A549 (cell line): ENCODE measurements at regions of chr5 and their contacts with region 1.

Region 1: DNA sequence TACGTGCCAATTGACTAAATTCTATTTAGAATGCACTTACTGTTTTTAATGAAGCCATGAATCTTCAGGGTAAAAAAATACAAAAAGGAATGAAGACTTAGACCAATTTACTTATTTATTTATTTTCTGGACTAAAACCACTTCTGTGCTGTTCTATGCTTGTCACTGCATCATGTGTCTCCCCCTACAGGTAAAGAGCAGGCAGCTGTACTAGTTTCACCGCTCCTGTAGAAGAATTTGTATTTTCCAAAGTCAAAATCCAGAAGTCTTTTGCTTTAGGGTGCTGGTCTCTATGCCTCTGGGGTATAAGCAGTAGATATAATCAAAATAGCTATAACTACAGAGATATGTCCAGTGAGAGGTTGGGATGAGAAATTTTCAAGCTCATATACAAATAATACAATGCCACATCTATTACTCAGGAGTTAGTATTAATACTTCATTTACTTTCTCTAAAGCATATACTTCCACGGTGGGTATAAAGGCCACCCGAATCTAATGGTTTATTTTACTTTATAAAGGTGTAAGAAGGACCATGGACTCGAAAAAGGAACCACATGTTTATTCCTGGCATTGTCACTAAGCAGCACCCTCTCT is 591.5 kb downstream of the RAB3C start:
- DNase-seq: peak; percentile 38 to 88
- ATAC-seq: peak; percentile 82 to 86
- H3K4me3 ChIP-seq: no peak overlapping the region
- H3K27ac ChIP-seq: peak overlapping the region; percentile 75 to 83
- H3K4me1 ChIP-seq: peaks cover 76% of the 10 kb centered on the region
- CTCF ChIP-seq: peak; percentile 90
- EP300 ChIP-seq: no peak
- POLR2A ChIP-seq: no peak
- RAD21 ChIP-seq: peak; percentile 88 to 91

Region 2: DNA sequence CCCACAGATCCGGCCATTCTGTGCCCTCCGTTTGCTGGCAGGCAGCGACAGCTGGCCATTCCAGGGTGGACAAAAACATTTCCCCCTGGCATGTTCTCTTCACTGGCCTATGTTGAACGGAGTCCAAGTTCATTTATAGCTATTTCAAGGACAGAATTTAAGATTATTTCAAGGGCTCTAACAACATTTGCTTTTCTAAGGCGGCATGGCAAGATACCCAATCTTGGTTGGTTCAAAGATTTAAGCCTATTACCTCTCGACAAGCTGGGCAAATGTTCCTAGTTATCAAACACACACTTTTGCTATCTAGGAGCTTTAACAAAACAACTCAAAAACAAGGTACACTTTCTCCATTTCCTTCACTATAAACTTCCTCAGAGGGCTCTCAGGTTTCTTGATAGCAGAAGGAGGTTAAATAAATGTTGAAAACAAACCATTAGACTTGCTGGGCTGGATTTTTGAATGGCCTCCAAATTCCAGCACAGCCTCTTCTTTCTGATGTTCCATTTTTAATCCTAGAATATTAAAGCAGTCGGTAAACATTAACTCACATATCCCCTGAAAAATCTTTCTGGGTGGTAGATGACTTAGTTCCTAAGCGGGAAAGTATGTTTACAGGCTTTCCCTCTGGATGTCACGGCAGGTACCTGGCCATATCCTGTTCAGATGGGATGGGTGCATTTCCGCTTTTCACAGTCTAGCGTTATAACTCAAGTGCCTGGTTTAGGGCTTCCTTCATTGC is 1046.7 kb before region 1 on chr5:
- CTCF ChIA-PET with region 1: no interaction called
- POLR2A ChIA-PET with region 1: no interaction called
- DNase-seq: peak; percentile 50 to 87
- ATAC-seq: peak; percentile 86 to 91
- H3K4me3 ChIP-seq: peak overlapping the region; percentile 7; the same call in 1 of the 3 replicates
- H3K27ac ChIP-seq: peak overlapping the region; percentile 83 to 84
- H3K4me1 ChIP-seq: peaks cover 56% of the 10 kb centered on the region
- CTCF ChIP-seq: no peak
- EP300 ChIP-seq: peak; percentile 80 to 92; a peak in 4 of 5 replicates
- POLR2A ChIP-seq: no peak
- RAD21 ChIP-seq: peak in 1 of 2 experiments; percentile 60; a peak in 3 of 5 replicates

Region 3: GRCh38 chr5:58999804-59000595 is 174.3 kb before region 1 on chr5:
- CTCF ChIA-PET with region 1: interaction called, 10 read pairs
- POLR2A ChIA-PET with region 1: interaction called, 3 read pairs
- DNase-seq: peak; percentile 75 to 95
- ATAC-seq: peak; percentile 83 to 89
- H3K4me3 ChIP-seq: peak overlapping the region; percentile 28; the same call in 1 of the 3 replicates
- H3K27ac ChIP-seq: peak overlapping the region; percentile 31 to 77; a peak in 4 of 6 replicates
- H3K4me1 ChIP-seq: peaks cover 91% of the 10 kb centered on the region
- CTCF ChIP-seq: no peak
- EP300 ChIP-seq: no peak
- POLR2A ChIP-seq: no peak
- RAD21 ChIP-seq: no peak

Region 4: DNA sequence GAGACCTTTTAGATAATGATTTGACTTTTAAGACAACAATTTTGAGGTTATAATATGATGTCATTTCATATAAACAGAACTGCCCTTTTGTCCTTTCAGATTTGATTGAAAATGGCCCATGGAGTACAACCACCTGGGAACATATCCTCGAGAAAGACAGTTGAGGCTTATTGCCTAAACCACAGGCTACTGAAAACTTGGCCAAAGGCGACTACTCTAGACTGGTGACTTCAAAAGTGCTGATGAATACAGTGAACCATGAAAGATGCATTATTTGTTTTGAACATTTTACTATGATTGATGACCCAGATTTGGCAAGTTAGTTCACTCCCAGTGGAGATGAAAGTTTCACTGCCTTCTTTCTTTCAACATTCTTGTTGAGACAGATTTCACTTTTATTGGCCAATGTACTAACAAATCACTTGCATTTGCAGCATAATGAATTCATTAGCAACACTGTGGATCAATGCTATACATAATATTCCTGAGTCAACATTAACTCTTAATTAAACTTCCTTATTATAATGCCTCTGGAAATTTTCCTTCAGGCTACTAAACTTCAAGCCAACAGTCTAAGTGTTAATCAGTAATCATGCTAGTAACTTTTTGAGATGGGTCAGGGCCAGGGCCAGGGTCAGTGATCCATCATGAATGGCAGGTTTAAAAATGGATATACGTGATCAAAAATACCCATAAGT is 111.2 kb before region 1 on chr5:
- CTCF ChIA-PET with region 1: interaction called, 14 read pairs
- POLR2A ChIA-PET with region 1: no interaction called
- DNase-seq: peak; percentile 35 to 97
- ATAC-seq: peak; percentile 45 to 69
- H3K4me3 ChIP-seq: no peak overlapping the region; the same call in 2 of the 3 replicates
- H3K27ac ChIP-seq: peak overlapping the region; percentile 95 to 98
- H3K4me1 ChIP-seq: peaks cover 100% of the 10 kb centered on the region
- CTCF ChIP-seq: no peak
- EP300 ChIP-seq: peak; percentile 96 to 99
- POLR2A ChIP-seq: no peak
- RAD21 ChIP-seq: no peak; a peak in 3 of 5 replicates

Region 5: DNA sequence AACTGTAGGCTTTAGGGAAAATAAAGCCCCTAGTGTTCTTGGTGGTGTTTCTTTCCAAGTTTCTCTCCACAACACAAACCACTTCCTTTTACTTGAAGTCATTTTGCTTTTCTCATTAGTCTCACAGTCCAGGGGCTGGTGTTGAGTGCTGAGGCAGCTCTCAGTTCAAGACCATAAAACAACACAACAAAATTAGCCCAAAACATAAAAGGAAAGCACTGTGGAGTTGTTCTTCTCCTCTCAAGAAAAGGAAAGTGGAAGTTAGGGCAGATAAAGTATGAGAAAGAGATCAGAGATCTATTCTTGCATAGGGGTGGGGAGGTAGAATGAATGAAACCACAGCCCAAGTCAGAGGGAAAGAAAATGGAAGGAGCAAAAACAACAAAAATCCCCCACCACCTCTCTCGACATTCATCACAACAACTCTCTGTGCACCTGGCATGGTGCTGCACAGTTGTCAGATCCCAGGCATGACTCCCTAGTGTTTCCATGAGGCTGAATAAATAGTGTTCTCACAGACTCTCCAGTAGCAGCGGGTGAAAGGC is 21.6 kb before region 1 on chr5:
- CTCF ChIA-PET with region 1: interaction called, 16 read pairs
- POLR2A ChIA-PET with region 1: no interaction called
- DNase-seq: no peak
- ATAC-seq: 0 out of 6 replicates have a peak, but pooled peaks of 1 of the 2 experiments have one; percentile 11
- H3K4me3 ChIP-seq: no peak overlapping the region
- H3K27ac ChIP-seq: peak overlapping the region; percentile 4 to 41; a peak in 3 of 6 replicates
- H3K4me1 ChIP-seq: peaks cover 78% of the 10 kb centered on the region
- CTCF ChIP-seq: no peak
- EP300 ChIP-seq: no peak
- POLR2A ChIP-seq: no peak
- RAD21 ChIP-seq: no peak

Region 6: DNA sequence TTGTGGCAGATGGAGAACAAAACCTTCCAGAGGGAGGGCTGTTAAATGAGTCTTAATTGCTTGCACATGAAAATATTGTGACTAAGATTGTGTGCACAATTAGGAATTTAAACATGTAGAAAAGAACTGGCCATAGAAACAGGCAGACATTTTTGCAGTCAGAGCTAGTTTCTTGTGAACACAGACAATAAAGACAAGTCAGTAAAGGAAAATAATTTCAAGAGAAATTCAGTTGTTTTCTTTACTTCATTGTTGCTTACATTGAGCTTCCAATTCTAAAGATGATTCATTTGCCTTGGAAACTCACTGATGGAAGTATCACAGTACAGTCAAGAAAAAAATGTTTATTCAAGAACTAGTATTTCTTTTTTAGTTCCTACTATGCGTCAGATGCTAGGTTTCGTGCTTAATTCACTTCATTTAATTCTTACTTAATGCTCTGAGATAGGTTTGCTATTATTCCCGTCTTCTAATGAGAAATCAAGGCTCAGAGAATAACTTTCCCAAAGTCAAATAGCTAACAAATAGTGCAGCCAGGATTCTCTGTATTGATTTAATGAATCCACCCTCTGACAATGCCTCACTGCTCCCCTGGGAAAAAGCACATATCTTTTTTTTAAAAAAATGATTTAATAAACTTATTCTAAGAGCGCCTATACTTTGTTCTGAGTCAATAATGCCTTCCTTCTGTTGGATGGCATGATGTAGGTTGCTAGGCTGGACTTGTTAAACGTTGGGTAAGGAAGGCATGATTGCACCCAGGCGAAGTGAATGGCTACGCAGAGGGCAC is 10.1 kb before region 1 on chr5:
- CTCF ChIA-PET with region 1: interaction called, 16 read pairs
- POLR2A ChIA-PET with region 1: no interaction called
- DNase-seq: no peak
- ATAC-seq: peak in 1 of 2 experiments; percentile 20; a peak in 1 of 6 replicates
- H3K4me3 ChIP-seq: no peak overlapping the region
- H3K27ac ChIP-seq: peak overlapping the region; percentile 45 to 77
- H3K4me1 ChIP-seq: peaks cover 84% of the 10 kb centered on the region
- CTCF ChIP-seq: no peak
- EP300 ChIP-seq: no peak
- POLR2A ChIP-seq: no peak
- RAD21 ChIP-seq: no peak

Region 7: DNA sequence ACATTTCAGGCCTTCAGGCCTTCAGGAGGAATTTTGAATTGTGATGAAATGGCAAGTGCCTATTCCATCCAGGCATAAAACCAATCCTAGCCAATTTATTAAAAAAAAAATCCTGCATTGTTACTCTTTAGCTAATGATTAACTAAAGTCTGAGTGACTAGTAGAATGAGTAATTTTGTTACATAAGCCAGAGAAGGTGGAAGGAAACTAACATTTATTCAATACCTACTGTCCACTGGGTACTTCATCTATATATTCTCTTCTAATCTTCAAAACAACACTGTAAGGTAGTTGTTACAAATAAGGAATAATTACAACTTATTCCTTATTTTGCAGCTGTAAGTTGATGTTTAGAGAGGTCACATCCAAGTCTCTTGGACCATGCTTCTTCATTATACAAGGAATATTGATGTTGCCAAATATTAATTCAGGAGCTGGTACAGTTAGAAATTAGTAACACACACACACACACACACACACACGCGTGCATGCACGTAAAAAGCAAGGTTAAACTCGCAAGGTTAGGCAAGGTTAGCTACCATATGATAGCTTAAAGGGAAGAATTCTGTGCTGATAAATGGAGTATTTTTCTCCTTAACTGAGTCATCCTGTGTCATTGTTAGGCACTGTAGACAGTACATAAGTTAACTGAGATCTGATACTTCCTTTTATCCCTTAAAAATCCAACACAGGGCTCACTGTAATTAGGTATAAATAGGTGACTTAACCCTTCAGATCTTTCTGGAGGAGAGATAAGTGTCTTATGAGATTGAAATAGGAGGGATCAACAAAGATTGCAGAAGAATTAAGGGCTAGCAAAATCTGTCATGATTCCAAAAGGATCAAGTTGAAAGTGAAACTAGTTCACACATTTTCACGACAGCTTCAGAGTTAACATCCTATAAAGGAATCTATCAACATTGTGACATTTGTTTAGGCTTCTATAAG is 122.2 kb after region 1 on chr5:
- CTCF ChIA-PET with region 1: no interaction called
- POLR2A ChIA-PET with region 1: no interaction called
- DNase-seq: peak; percentile 52 to 66
- ATAC-seq: peak; percentile 72 to 83
- H3K4me3 ChIP-seq: peak overlapping the region; percentile 37
- H3K27ac ChIP-seq: peak overlapping the region; percentile 79 to 83
- H3K4me1 ChIP-seq: peaks cover 93% of the 10 kb centered on the region
- CTCF ChIP-seq: no peak
- EP300 ChIP-seq: no peak
- POLR2A ChIP-seq: no peak
- RAD21 ChIP-seq: 0 out of 5 replicates have a peak, but pooled peaks of 1 of the 2 experiments have one; percentile 14

Region 8: DNA sequence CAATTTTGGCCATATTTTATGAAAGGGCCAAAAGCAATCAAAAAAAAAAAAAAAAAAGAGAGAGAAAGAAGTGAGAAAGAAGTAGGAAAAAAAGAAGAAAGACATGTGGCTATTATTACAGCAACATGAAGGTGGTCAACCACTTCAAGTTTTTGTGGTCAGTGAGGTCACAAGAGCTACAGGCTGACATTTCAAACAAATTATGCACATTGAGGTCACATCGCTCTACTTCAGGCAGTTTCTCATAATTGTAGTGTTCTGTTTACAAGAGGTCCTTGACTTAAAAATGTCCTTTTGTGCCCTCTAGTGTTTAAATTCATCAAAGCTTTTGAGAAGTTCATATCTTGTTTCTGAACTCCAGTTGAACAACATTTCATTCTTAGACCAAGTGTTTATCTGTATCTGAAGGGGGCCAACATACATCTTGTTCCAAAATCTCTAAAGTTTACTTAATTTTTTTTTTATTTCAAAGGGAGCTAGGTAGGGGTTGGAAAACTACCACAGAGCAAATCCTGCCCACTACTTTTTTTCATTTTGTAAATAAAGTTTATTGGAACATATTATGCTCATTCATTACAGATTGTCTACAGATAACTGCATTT is 206.1 kb after region 1 on chr5:
- CTCF ChIA-PET with region 1: interaction called, 11 read pairs
- POLR2A ChIA-PET with region 1: no interaction called
- DNase-seq: peak in 1 of 2 experiments; percentile 92
- ATAC-seq: peak; percentile 84 to 86
- H3K4me3 ChIP-seq: no peak overlapping the region
- H3K27ac ChIP-seq: peak overlapping the region; percentile 45 to 73
- H3K4me1 ChIP-seq: peaks cover 58% of the 10 kb centered on the region
- CTCF ChIP-seq: peak; percentile 66
- EP300 ChIP-seq: no peak
- POLR2A ChIP-seq: no peak
- RAD21 ChIP-seq: peak; percentile 78 to 83

Region 9: DNA sequence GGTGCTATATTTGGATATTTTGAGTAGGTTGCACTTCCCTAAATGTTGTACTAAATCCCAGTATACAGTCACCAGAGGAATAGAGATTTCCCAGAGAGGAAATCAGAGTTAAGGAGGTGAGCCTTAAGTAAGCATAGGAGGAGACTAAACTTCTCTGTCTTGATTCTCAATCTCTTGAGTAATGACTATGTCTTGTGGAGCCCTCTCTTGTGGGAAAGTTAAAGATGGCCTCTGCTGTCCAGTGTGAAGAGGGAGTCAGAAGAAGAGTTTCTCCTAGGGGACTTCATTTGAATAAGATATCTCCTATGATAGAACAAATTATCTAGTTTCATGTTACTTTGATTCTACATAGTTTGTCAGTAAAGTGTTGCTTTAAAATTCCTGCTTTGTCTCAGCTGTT is 216.6 kb after region 1 on chr5:
- CTCF ChIA-PET with region 1: no interaction called
- POLR2A ChIA-PET with region 1: no interaction called
- DNase-seq: no peak
- ATAC-seq: peak; percentile 73 to 74; a peak in 4 of 6 replicates
- H3K4me3 ChIP-seq: no peak overlapping the region
- H3K27ac ChIP-seq: peak overlapping the region; percentile 51 to 64
- H3K4me1 ChIP-seq: peaks cover 46% of the 10 kb centered on the region
- CTCF ChIP-seq: no peak
- EP300 ChIP-seq: no peak
- POLR2A ChIP-seq: no peak
- RAD21 ChIP-seq: no peak